OCI-LY7 (cell line): ENCODE measurements at regions of chr2 and their contacts with region 1.

Region 1: GRCh38 chr2:47323009-47323821 is 79.7 kb upstream of the MSH2 start:
- DNase-seq: peak; percentile 70
- H3K4me3 ChIP-seq: no peak overlapping the region
- H3K27ac ChIP-seq: no peak overlapping the region
- H3K4me1 ChIP-seq: no peaks in the 10 kb centered on the region
- CTCF ChIP-seq: peak; percentile 94

Region 2: GRCh38 chr2:46915811-46916630 is 407.2 kb before region 1 on chr2:
- CTCF ChIA-PET with region 1: interaction called, 5 read pairs
- POLR2A ChIA-PET with region 1: no interaction called
- intact Hi-C with region 1: loop called (anchors 5 kb)
- DNase-seq: peak; percentile 81
- H3K4me3 ChIP-seq: peak overlapping the region; percentile 84
- H3K27ac ChIP-seq: peak overlapping the region; percentile 52
- H3K4me1 ChIP-seq: peaks cover 46% of the 10 kb centered on the region
- CTCF ChIP-seq: no peak

Region 3: GRCh38 chr2:47070920-47071824 is 252.0 kb before region 1 on chr2:
- CTCF ChIA-PET with region 1: no interaction called
- POLR2A ChIA-PET with region 1: no interaction called
- intact Hi-C with region 1: loop called (anchors 10 kb)
- DNase-seq: peak; percentile 15
- H3K4me3 ChIP-seq: no peak overlapping the region
- H3K27ac ChIP-seq: peak overlapping the region; percentile 12
- H3K4me1 ChIP-seq: peaks cover 20% of the 10 kb centered on the region
- CTCF ChIP-seq: no peak

Region 4: GRCh38 chr2:47134386-47135090 is 188.7 kb before region 1 on chr2:
- CTCF ChIA-PET with region 1: no interaction called
- POLR2A ChIA-PET with region 1: no interaction called
- intact Hi-C with region 1: loop called (anchors 10 kb)
- DNase-seq: no peak
- H3K4me3 ChIP-seq: no peak overlapping the region
- H3K27ac ChIP-seq: no peak overlapping the region
- H3K4me1 ChIP-seq: no peaks in the 10 kb centered on the region
- CTCF ChIP-seq: no peak

Region 5: GRCh38 chr2:47429795-47430194 is 106.6 kb after region 1 on chr2:
- CTCF ChIA-PET with region 1: no interaction called
- POLR2A ChIA-PET with region 1: interaction called, 10 read pairs
- intact Hi-C with region 1: no loop called
- DNase-seq: no peak
- H3K4me3 ChIP-seq: no peak overlapping the region
- H3K27ac ChIP-seq: no peak overlapping the region
- H3K4me1 ChIP-seq: peaks cover 4% of the 10 kb centered on the region
- CTCF ChIP-seq: no peak

Region 6: GRCh38 chr2:47483191-47483590 is 160.0 kb after region 1 on chr2:
- CTCF ChIA-PET with region 1: no interaction called
- POLR2A ChIA-PET with region 1: no interaction called
- intact Hi-C with region 1: no loop called
- DNase-seq: no peak
- H3K4me3 ChIP-seq: no peak overlapping the region
- H3K27ac ChIP-seq: no peak overlapping the region
- H3K4me1 ChIP-seq: peaks cover 18% of the 10 kb centered on the region
- CTCF ChIP-seq: no peak